Ovary (tissue), 10 donors: ENCODE measurements at regions of chr14 and their contacts with region 1.

Region 1: GRCh38 chr14:91996948-91997371 is 42.9 kb downstream of the TRIP11 start:
- DNase-seq: no peak
- H3K4me3 ChIP-seq: no peak overlapping the region
- H3K27ac ChIP-seq: no peak overlapping the region
- H3K4me1 ChIP-seq: no peaks in the 10 kb centered on the region
- H3K27me3 ChIP-seq: no peaks in the 10 kb centered on the region
- CTCF ChIP-seq: peak in 2 of 3 donors; percentile 36 to 58
- EP300 ChIP-seq: no peak
- POLR2A ChIP-seq: no peak

Region 2: DNA sequence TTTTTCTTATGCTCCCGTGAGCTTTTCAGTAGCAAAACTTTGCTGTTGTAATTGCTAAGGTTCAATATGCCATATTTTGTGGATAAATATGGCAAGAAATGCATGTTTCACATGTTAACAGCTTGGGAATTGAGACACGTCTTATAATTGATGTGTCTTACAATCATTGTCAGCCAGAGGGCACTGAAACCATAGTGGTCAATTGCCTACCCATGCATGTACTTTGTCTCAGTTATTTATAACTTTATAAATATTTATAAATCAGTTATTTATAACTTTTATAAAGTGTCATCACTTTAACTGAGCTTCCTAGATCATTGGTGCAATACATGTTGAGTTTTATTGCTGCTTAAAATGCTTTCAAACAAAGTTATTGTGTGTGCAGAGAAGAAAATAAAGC is 347.0 kb before region 1 on chr14:
- intact Hi-C with region 1: loop called in 1 of 4 experiments (anchors 10 kb)
- DNase-seq: no peak
- H3K4me3 ChIP-seq: no peak overlapping the region
- H3K27ac ChIP-seq: no peak overlapping the region
- H3K4me1 ChIP-seq: no peaks in the 10 kb centered on the region
- H3K27me3 ChIP-seq: no peaks in the 10 kb centered on the region
- CTCF ChIP-seq: peak in 2 of 3 donors; percentile 36 to 49
- EP300 ChIP-seq: no peak
- POLR2A ChIP-seq: no peak

Region 3: DNA sequence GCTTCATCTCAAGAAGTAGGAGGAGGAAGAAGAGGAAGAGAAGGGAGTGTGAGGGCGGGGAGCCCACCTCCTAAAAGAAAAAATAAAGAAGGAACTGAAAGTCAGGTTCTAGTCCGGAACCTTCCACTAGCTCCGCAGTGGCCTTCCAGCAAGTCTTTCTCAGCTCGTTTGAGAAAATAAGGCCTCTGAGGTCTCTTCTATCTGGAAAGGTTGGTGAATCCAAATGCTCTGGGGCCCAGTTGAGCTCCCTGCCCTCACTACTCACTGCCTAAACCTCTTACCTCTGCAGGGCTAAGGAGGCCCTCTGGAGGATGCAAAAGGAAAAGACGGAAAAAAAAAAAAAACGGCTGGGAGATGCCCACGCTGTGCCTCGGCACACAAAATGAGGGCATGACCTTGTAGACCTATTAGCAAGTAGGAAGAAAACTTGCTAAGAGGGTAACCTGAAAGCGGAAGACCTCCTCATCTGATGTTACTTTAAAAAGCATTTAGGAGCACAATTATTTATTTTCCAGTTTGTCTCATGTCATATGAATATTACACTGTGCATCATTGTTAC is 85.4 kb before region 1 on chr14:
- intact Hi-C with region 1: no loop called
- DNase-seq: no peak
- H3K4me3 ChIP-seq: no peak overlapping the region
- H3K27ac ChIP-seq: no peak overlapping the region
- H3K4me1 ChIP-seq: no peaks in the 10 kb centered on the region
- H3K27me3 ChIP-seq: no peaks in the 10 kb centered on the region
- CTCF ChIP-seq: no peak
- EP300 ChIP-seq: no peak
- POLR2A ChIP-seq: no peak

Region 4: GRCh38 chr14:91929700-91930099 is 67.3 kb before region 1 on chr14:
- intact Hi-C with region 1: no loop called
- DNase-seq: peak in 1 of 5 donors; percentile 24
- H3K4me3 ChIP-seq: no peak overlapping the region
- H3K27ac ChIP-seq: no peak overlapping the region
- H3K4me1 ChIP-seq: peaks cover 11% of the 10 kb centered on the region
- H3K27me3 ChIP-seq: no peaks in the 10 kb centered on the region
- CTCF ChIP-seq: no peak
- EP300 ChIP-seq: no peak
- POLR2A ChIP-seq: no peak

Region 5: GRCh38 chr14:92263681-92264080 is 266.7 kb after region 1 on chr14:
- intact Hi-C with region 1: no loop called
- DNase-seq: no peak
- H3K4me3 ChIP-seq: no peak overlapping the region
- H3K27ac ChIP-seq: no peak overlapping the region
- H3K4me1 ChIP-seq: peaks cover 2% of the 10 kb centered on the region
- H3K27me3 ChIP-seq: no peaks in the 10 kb centered on the region
- CTCF ChIP-seq: no peak
- EP300 ChIP-seq: no peak
- POLR2A ChIP-seq: no peak